ENCODE measurements at regions of chr2 and their contacts with region 1.

Region 1: GRCh38 chr2:105576440-105577252 is 168.1 kb upstream of the NCK2 start:
- DNase-seq: peak; percentile 20
- H3K4me3 Mint-ChIP-seq: no peak overlapping the region
- H3K27ac Mint-ChIP-seq: peak overlapping the region; percentile 75
- H3K4me1 Mint-ChIP-seq: peaks cover 18% of the 10 kb centered on the region
- H3K27me3 Mint-ChIP-seq: no peaks in the 10 kb centered on the region

Region 2: GRCh38 chr2:105737980-105738657 is 161.5 kb after region 1 on chr2:
- CTCF ChIA-PET with region 1: interaction called, 7 read pairs
- POLR2A ChIA-PET with region 1: no interaction called
- intact Hi-C with region 1: loop called (anchors 1 kb)
- DNase-seq: peak; percentile 55
- H3K4me3 Mint-ChIP-seq: peak overlapping the region; percentile 64
- H3K27ac Mint-ChIP-seq: peak overlapping the region; percentile 96
- H3K4me1 Mint-ChIP-seq: peaks cover 90% of the 10 kb centered on the region
- H3K27me3 Mint-ChIP-seq: no peaks in the 10 kb centered on the region

Region 3: DNA sequence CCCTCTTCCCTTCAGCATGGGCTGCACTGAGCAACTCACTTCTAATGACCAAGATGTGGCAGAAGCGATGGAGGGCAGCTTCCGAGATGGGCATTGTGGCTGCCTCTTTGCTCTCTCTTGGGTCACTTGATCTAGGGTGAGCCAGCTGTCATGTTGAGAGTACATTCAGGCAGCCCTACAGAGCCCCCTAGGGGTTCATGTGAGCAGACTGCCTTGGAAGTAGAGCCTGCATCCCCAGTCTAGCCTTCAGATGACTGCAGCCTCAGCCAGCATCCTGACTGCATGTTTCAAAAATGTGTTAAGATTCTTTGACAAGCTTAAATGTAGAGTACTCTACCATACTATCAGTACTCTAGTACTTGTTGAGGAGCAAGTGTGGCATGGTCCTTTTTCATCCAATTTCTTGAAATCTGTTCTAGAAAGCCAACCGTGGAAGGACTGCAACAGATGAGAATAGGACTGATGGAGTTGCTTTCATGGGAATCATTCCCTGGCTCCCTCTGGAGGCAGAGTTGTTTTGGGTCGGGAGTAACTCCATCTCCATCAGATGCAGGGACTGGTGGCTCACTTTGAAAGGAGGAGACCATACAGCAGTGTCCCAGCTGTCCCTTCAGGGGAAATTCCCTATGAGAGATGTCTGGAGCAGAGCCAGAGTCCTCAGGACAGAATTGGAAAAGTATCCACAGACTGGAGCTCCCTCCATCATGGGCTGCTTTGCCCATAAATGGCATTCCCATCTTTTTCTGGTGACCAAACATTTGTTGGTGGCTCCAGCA is 312.2 kb after region 1 on chr2:
- CTCF ChIA-PET with region 1: interaction called, 8 read pairs
- POLR2A ChIA-PET with region 1: no interaction called
- intact Hi-C with region 1: loop called (anchors 1 kb)
- DNase-seq: peak; percentile 71
- H3K4me3 Mint-ChIP-seq: no peak overlapping the region
- H3K27ac Mint-ChIP-seq: peak overlapping the region; percentile 55
- H3K4me1 Mint-ChIP-seq: peaks cover 64% of the 10 kb centered on the region
- H3K27me3 Mint-ChIP-seq: no peaks in the 10 kb centered on the region

Region 4: DNA sequence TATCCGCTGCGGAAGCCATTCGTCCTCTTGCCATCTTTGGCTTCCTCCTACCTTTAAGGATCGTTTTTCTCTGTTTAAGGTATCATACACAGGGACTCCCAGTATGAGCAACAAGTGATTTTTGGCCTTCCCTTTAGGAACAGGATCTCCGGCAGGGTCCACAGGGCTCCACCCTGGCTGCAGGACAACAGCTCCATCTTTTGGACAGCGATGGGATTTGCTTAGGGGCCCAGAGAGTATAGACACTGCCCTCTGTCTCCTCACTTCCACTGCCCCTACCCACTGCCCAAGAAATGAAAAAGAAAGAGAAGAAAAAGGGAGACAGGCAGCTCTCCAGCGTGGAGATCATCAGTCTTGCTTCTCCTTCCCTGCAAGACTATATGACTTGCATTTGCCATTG is 392.9 kb after region 1 on chr2:
- CTCF ChIA-PET with region 1: interaction called, 4 read pairs
- POLR2A ChIA-PET with region 1: no interaction called
- intact Hi-C with region 1: loop called (anchors 1 kb)
- DNase-seq: peak; percentile 46
- H3K4me3 Mint-ChIP-seq: no peak overlapping the region
- H3K27ac Mint-ChIP-seq: no peak overlapping the region
- H3K4me1 Mint-ChIP-seq: peaks cover 11% of the 10 kb centered on the region
- H3K27me3 Mint-ChIP-seq: no peaks in the 10 kb centered on the region

Region 5: DNA sequence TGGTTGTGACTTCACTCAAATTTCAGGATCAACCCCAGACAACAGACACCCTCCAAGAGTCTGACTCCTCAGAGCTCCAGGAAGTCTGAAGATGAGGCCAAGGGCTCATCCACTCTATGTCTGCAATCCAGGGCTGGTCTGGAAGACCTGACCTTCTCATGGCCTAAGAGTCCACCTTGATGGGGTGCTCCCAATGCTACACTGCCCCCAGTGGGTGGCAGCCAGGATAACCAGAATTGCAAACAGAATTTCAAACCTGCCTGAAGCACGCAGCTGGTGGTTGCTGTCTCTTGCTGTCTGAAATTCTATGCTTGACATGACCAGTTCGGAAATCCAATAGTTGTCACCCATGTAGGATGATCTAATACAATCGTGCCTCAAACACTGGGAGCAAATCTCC is 521.4 kb after region 1 on chr2:
- CTCF ChIA-PET with region 1: interaction called, 13 read pairs
- POLR2A ChIA-PET with region 1: no interaction called
- intact Hi-C with region 1: loop called (anchors 1 kb)
- DNase-seq: peak; percentile 50
- H3K4me3 Mint-ChIP-seq: no peak overlapping the region
- H3K27ac Mint-ChIP-seq: no peak overlapping the region
- H3K4me1 Mint-ChIP-seq: peaks cover 36% of the 10 kb centered on the region
- H3K27me3 Mint-ChIP-seq: no peaks in the 10 kb centered on the region

Region 6: DNA sequence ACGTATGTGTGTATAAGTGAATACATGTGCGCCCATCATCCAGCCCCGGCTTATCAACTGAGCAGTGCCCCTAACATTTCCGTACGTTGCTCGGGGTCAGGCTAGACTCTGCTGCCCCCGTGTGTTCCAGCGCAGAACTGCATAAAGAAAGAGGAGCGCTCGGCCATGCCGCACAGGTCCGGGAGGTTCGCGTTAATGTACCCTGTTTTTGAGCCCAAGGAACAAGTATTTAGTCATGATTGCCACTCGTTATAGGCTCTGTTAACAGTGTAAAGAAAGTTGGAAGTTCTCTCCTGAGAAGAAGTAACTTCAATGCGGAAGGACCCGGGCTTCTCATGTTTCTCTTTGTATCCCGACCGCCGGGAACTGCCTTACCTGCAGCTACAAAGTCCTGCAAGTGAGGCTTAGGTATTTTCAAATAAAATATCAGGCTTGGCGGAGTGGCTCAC is 966.2 kb after region 1 on chr2:
- CTCF ChIA-PET with region 1: no interaction called
- POLR2A ChIA-PET with region 1: no interaction called
- intact Hi-C with region 1: loop called (anchors 2 kb)
- DNase-seq: peak; percentile 84
- H3K4me3 Mint-ChIP-seq: peak overlapping the region; percentile 57
- H3K27ac Mint-ChIP-seq: no peak overlapping the region
- H3K4me1 Mint-ChIP-seq: no peaks in the 10 kb centered on the region
- H3K27me3 Mint-ChIP-seq: peaks cover 22% of the 10 kb centered on the region